ENCODE measurements at regions of chr5 and their contacts with region 1.

Region 1: DNA sequence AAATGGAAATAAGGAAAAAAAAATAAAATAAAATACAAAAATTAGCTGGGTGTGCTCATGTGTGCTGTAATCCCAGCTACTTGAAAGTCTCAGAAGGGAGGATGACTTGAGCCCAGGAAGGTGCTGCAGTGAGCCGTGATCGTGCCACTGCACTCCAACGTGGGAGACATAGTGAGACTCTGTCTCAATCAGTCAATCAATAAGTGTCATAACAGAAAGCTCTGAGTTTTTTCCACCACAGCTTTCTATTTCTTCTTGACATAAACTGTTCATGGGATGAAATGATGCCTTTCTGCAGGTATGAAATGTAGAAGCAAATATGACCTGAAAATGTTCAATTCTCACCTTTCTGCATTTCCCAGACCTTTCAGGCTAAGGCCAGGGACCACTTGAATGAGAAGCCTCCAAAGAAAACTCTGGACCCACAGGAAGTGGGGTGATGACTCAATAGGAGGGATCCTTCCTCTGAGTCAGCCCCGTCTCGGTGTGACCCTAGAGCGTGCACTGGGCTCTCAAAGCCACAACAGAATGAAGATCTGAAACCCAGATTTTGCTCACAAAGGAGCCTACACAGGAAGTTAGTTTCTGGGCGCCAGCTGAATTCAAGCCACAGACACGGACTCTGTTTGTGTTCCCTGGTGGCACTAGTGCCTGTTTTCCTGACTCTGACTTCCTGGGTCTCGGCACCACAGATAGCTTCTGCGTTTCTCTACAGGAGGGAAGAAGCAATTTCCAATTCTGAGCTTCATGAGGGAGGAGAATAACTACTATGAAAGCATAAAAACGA is 62.0 kb downstream of the ANKH start:
- DNase-seq: peak; percentile 93
- H3K4me3 Mint-ChIP-seq: peak overlapping the region; percentile 65
- H3K27ac Mint-ChIP-seq: peak overlapping the region; percentile 80
- H3K4me1 Mint-ChIP-seq: peaks cover 37% of the 10 kb centered on the region
- H3K27me3 Mint-ChIP-seq: peaks cover 4% of the 10 kb centered on the region

Region 2: GRCh38 chr5:14415024-14415697 is 394.4 kb before region 1 on chr5:
- intact Hi-C with region 1: loop called (anchors 10 kb)
- DNase-seq: peak; percentile 66
- H3K4me3 Mint-ChIP-seq: peak overlapping the region; percentile 64
- H3K27ac Mint-ChIP-seq: peak overlapping the region; percentile 93
- H3K4me1 Mint-ChIP-seq: peaks cover 46% of the 10 kb centered on the region
- H3K27me3 Mint-ChIP-seq: no peaks in the 10 kb centered on the region

Region 3: DNA sequence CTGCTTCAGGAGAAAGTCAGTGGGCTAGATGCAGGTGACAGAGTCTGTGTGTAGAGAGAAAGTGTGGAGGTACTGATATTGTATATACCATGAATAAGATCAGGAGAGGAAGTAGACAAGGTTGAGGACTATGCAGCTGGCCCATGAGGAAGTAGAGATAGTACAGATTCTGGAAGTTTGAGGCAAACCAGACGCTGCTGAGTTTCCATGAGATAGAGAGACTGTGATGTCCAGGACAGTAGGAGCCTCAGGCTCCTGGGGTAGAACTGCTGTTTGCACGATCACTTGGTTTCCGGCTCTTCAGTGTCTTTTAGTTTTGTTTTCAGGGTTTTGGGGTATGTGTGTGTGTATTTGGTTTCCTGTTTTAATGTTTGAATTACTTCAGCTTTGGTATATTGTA is 214.4 kb before region 1 on chr5:
- intact Hi-C with region 1: loop called (anchors 2 kb)
- DNase-seq: peak; percentile 89
- H3K4me3 Mint-ChIP-seq: peak overlapping the region; percentile 78
- H3K27ac Mint-ChIP-seq: peak overlapping the region; percentile 94
- H3K4me1 Mint-ChIP-seq: peaks cover 78% of the 10 kb centered on the region
- H3K27me3 Mint-ChIP-seq: no peaks in the 10 kb centered on the region

Region 4: DNA sequence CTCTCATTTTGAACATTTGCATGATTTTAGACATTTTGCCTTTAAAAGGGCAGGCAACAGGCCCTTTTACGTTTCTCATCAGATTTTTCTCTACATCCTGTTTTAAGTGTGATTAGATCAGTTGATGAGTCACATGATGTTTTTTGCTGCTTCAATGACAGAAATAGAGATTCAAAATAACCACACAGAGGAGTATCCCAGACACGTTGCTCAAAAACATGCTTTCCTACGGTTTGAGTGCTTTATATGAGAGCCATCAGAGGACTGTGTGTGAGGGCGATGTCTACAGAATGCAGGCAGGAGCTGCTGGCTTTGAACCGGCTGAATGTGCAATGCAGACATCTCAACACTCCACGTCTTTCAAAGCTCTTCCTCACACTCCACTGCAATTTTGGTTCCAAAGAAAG is 102.9 kb before region 1 on chr5:
- intact Hi-C with region 1: loop called (anchors 5 kb)
- DNase-seq: peak; percentile 87
- H3K4me3 Mint-ChIP-seq: peak overlapping the region; percentile 82
- H3K27ac Mint-ChIP-seq: peak overlapping the region; percentile 99
- H3K4me1 Mint-ChIP-seq: peaks cover 69% of the 10 kb centered on the region
- H3K27me3 Mint-ChIP-seq: no peaks in the 10 kb centered on the region

Region 5: DNA sequence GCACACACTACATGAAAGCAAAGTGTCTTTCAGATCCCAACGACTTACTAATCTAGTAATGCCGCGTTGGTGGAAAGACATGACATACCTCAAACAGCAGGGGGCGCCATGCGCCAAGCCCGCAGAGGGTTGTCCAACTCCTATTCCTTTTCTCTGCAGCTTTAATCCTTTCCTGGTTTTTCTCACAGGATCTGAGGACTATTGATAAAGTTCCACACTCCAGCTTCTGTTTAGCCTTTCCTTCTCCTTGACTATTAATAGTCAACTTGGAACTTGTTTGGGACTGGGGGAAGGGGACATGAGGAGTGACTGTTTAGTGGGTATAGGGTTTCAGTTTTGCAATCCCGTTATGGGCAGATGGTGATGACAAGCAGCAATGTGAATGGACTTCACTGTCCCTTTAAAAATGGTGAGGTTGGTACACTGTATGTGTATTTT is 82.1 kb before region 1 on chr5:
- intact Hi-C with region 1: loop called (anchors 5 kb)
- DNase-seq: peak; percentile 92
- H3K4me3 Mint-ChIP-seq: no peak overlapping the region
- H3K27ac Mint-ChIP-seq: no peak overlapping the region
- H3K4me1 Mint-ChIP-seq: peaks cover 4% of the 10 kb centered on the region
- H3K27me3 Mint-ChIP-seq: no peaks in the 10 kb centered on the region

Region 6: GRCh38 chr5:14925326-14925725 is 115.8 kb after region 1 on chr5:
- intact Hi-C with region 1: loop called (anchors 1 kb)
- DNase-seq: no peak
- H3K4me3 Mint-ChIP-seq: peak overlapping the region; percentile 60
- H3K27ac Mint-ChIP-seq: peak overlapping the region; percentile 87
- H3K4me1 Mint-ChIP-seq: peaks cover 52% of the 10 kb centered on the region
- H3K27me3 Mint-ChIP-seq: no peaks in the 10 kb centered on the region

Region 7: DNA sequence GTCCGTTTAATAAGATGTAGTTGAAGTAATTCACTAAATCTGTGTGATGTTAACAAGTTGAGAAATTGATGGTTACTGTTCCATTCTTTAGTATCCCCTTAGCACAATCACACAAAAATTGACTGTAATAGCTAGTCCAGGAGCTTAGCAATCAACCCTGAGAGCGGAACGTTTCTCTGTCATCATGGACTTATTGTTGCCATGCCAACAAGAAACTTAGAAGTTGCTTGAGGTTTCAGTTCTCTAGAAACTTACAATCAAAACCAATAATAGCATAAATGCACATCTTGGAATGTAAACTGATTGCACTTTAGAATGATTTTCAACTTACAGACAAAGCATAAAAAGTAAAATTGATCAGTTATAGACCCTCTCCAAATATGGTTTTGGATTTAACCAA is 187.4 kb after region 1 on chr5:
- intact Hi-C with region 1: loop called (anchors 2 kb)
- DNase-seq: no peak
- H3K4me3 Mint-ChIP-seq: no peak overlapping the region
- H3K27ac Mint-ChIP-seq: no peak overlapping the region
- H3K4me1 Mint-ChIP-seq: peaks cover 22% of the 10 kb centered on the region
- H3K27me3 Mint-ChIP-seq: peaks cover 21% of the 10 kb centered on the region